A673 (cell line): ENCODE measurements at regions of chr13 and their contacts with region 1.

Region 1: DNA sequence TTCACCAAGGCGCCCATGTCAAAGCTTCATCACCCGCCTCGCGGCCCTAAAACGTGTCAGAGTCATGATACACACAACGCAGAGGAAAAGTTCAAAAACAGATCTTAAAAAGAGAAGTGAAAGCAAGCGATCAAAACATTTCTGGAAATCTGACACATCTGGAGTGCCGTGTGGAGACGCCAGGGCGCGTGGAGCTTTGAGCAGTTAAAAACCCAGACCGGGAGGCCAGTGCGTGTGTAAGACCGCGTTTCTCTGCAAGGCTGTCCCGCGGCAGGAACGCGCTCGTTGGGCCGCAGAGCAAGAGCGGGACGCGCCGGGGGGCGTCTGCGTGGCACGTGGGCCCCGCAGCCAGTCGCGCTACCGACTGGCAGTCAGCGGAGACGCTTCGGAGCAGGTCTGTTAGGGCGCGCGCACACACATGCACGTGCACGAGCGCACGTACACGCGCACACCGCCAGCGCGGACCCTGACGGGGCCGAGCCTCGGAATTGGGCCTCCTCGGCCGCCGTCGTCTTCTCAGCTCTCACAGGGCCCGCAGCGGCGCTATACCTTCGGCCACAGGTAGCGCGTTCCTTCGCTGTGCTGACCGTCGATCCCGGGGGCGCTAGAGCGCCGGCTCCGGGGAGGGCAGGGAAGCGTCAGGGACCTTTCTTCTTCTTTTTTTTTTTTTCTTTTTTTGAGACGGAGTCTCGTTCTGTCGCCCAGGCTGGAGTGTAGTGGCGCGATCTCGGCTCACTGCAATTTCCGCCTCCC is 35.8 kb downstream of the RNF6 start:
- DNase-seq: peak; percentile 93
- H3K4me3 ChIP-seq: peak overlapping the region; percentile 59
- H3K27ac ChIP-seq: peak overlapping the region; percentile 60
- H3K4me1 ChIP-seq: no peaks in the 10 kb centered on the region
- H3K27me3 ChIP-seq: no peaks in the 10 kb centered on the region
- CTCF ChIP-seq: peak; percentile 50

Region 2: GRCh38 chr13:25973085-25973484 is 213.2 kb before region 1 on chr13:
- CTCF ChIA-PET with region 1: no interaction called
- POLR2A ChIA-PET with region 1: interaction called, 10 read pairs
- intact Hi-C with region 1: no loop called
- DNase-seq: no peak
- H3K4me3 ChIP-seq: no peak overlapping the region
- H3K27ac ChIP-seq: no peak overlapping the region
- H3K4me1 ChIP-seq: peaks cover 24% of the 10 kb centered on the region
- H3K27me3 ChIP-seq: no peaks in the 10 kb centered on the region
- CTCF ChIP-seq: no peak

Region 3: DNA sequence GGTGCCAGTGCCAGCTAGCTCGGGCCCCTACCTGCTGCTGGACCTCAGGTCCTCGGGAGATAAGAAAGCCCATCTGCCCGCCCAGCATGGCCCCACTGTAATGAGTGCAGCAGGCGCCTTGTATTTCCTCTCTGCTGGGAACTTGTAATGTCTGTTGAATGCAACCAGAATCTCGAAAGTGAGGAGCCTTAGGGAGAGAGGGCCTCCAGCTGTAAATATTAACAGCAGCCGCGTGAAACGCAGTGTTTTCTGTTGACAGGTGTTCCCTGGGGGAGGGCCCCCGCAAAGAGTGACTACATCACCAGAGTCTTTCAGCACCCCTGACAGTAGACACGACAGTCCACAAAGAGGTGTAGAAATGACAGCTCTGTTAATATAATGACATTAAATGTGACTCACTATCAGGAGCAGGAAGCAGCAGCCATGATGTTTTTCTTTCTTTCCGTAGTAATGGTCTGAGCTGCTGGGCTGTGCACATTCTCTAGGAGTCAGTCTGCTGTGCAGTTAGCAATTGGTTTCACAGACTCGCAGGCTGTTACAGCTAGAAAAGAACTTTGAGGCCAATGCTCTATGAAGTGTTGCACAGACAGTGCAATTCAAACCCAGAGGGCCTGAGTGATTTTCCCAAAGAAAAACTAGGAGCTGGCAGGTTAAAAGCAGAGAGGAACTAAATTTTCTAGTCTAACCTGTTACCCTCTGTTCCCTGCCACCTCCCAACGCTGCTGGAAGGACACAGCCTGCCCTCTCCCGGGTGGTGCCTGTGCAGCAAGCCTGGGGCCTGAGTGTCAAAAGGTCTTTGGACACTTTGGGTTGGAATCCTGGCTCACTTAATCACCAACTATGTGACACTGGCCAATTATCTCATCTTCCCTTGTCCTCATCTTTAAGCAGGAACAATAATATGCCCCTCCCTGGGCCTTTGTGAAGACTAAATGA is 312.6 kb after region 1 on chr13:
- CTCF ChIA-PET with region 1: interaction called, 7 read pairs
- POLR2A ChIA-PET with region 1: no interaction called
- intact Hi-C with region 1: loop called (anchors 2 kb)
- DNase-seq: peak; percentile 42
- H3K4me3 ChIP-seq: no peak overlapping the region
- H3K27ac ChIP-seq: peak overlapping the region; percentile 79
- H3K4me1 ChIP-seq: peaks cover 32% of the 10 kb centered on the region
- H3K27me3 ChIP-seq: no peaks in the 10 kb centered on the region
- CTCF ChIP-seq: no peak

Region 4: GRCh38 chr13:26601669-26602068 is 415.4 kb after region 1 on chr13:
- CTCF ChIA-PET with region 1: interaction called, 13 read pairs
- POLR2A ChIA-PET with region 1: no interaction called
- intact Hi-C with region 1: loop called (anchors 10 kb)
- DNase-seq: peak; percentile 20
- H3K4me3 ChIP-seq: no peak overlapping the region
- H3K27ac ChIP-seq: no peak overlapping the region
- H3K4me1 ChIP-seq: no peaks in the 10 kb centered on the region
- H3K27me3 ChIP-seq: no peaks in the 10 kb centered on the region
- CTCF ChIP-seq: peak; percentile 31; the same call in 1 of the 2 replicates

Region 5: GRCh38 chr13:26698392-26699196 is 512.3 kb after region 1 on chr13:
- CTCF ChIA-PET with region 1: interaction called, 65 read pairs
- POLR2A ChIA-PET with region 1: no interaction called
- intact Hi-C with region 1: loop called (anchors 2 kb)
- DNase-seq: peak; percentile 86
- H3K4me3 ChIP-seq: no peak overlapping the region
- H3K27ac ChIP-seq: no peak overlapping the region
- H3K4me1 ChIP-seq: no peaks in the 10 kb centered on the region
- H3K27me3 ChIP-seq: no peaks in the 10 kb centered on the region
- CTCF ChIP-seq: peak; percentile 95

Region 6: DNA sequence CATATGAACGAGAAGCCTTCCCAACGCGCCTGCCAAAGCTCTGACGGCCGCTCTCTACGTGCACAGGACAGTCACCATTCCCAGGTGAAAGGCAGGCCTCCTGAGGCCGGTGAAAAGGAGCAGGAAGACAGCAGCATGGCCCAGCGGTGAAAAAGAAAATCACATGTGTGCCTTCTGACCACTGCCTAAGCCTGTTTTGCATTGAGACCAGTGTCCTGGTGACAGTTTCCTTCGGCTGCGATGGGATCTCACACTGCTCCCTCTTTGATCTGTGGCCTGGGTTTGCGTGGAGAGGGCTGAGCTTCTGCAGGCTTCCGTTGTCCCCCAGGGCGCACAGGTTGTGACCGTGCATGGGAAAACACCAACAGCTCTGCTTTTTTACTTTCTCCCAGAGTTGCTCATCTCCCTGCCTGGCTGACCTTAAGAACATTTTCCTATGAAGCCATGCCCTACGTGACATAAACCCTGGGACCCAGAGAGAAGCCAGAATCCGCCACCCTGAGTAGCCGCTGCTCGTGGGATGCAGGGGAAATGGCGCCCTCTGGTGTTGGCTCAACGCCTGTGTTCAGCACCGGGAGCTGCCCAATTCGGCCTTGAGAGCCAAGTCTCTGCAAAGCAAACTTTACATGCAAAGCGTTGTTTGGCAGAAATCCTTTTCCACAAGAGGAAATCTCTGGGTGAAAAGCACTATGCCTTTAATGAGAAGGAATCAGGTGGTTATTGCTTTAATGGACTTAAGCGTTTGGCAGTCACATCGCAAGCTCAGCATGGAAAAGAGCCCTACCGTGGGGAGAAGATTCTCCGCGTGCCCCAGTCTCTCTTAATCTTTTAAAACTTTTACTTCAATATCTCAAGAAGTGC is 686.5 kb after region 1 on chr13:
- CTCF ChIA-PET with region 1: no interaction called
- POLR2A ChIA-PET with region 1: no interaction called
- intact Hi-C with region 1: loop called (anchors 5 kb)
- DNase-seq: peak; percentile 58
- H3K4me3 ChIP-seq: no peak overlapping the region
- H3K27ac ChIP-seq: no peak overlapping the region
- H3K4me1 ChIP-seq: no peaks in the 10 kb centered on the region
- H3K27me3 ChIP-seq: peaks cover 17% of the 10 kb centered on the region
- CTCF ChIP-seq: peak; percentile 92

Region 7: DNA sequence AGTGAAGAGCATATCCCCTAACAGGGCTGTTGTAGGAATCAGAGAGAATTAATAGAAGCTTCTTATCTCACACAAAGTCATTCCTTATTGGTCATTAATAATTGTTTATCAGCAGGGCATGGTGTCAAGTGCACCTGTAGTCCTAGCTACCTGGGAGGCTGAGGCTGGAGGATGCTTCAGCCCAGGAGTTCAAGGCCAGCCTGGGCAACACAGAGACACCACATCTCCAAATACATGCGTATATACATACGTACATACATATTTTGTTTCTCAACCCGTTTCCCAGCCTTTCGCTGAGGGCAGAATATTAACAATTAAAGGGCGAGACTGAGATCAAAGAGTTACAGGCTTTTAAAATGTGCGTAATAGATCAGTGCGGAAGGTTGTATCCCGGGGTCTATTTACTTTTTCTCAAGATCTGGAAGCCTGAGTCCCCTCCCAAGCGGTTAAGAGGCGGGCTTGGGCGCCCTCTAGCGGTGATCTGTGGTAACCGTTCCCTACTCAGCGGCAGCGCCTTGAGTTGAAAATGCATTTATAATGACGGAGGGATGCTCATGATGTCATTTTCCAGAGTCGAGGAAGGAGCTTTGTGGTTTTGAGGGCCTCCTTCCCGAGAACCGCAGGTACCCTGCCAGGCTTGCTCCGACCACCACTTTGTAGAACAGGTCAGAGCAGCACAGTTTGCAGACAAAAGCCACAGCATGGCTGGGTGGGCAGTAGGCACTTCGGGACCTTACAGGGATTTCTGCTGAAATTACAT is 743.9 kb after region 1 on chr13:
- CTCF ChIA-PET with region 1: interaction called, 12 read pairs
- POLR2A ChIA-PET with region 1: no interaction called
- intact Hi-C with region 1: no loop called
- DNase-seq: peak; percentile 83
- H3K4me3 ChIP-seq: no peak overlapping the region
- H3K27ac ChIP-seq: no peak overlapping the region
- H3K4me1 ChIP-seq: no peaks in the 10 kb centered on the region
- H3K27me3 ChIP-seq: peaks cover 27% of the 10 kb centered on the region
- CTCF ChIP-seq: peak; percentile 94